ENCODE measurements at regions of chr3 and their contacts with region 1.

Region 1: DNA sequence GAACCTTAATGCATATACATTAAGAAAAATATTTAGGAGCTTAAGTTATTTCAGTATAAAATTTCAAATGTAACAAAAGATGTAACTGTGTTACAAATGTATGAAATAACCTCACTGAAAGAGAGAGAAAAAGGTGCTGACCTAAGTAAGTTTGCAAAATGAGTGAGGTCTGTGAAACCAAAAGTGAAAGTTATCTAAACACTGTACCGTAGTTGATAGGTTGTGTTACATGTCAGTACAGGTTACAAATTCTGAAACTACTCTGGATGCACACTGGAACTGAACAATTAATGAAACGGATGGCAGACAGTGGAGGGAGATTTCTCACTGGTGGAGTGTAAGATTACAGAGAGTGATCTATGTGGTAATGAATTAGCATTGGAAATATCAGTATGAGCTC is 420.7 kb downstream of the ZNF385D start:
- DNase-seq: peak; percentile 17
- ATAC-seq: no peak
- H3K4me3 ChIP-seq: peak overlapping the region; percentile 47
- H3K27ac ChIP-seq: no peak overlapping the region
- H3K4me1 ChIP-seq: no peaks in the 10 kb centered on the region
- H3K27me3 ChIP-seq: no peaks in the 10 kb centered on the region
- CTCF ChIP-seq: no peak

Region 2: DNA sequence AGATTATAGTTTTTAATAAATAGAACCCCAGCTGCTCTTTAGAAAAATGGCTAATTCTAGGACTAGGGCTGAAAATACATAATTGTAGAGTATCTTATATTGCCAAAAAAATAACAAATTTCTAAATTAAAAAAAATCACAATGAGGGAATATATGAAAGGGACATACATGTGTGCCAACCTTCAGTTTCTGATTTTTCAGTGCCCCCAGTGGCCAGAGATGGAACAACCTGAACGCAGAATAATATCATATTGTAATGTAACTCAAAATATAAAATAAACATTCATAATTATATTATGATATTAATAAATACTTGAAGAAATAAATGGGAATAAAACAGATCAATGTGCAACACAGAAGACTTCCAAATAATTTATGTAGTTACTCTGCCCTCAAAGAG is 39.7 kb before region 1 on chr3:
- CTCF ChIA-PET with region 1: no interaction called
- POLR2A ChIA-PET with region 1: no interaction called
- intact Hi-C with region 1: no loop called
- DNase-seq: peak; percentile 23
- ATAC-seq: no peak
- H3K4me3 ChIP-seq: no peak overlapping the region
- H3K27ac ChIP-seq: no peak overlapping the region
- H3K4me1 ChIP-seq: 0 out of 2 replicates have a peak, but pooled peaks cover 5% of the 10 kb centered on the region
- H3K27me3 ChIP-seq: no peaks in the 10 kb centered on the region
- CTCF ChIP-seq: peak; percentile 60

Region 3: DNA sequence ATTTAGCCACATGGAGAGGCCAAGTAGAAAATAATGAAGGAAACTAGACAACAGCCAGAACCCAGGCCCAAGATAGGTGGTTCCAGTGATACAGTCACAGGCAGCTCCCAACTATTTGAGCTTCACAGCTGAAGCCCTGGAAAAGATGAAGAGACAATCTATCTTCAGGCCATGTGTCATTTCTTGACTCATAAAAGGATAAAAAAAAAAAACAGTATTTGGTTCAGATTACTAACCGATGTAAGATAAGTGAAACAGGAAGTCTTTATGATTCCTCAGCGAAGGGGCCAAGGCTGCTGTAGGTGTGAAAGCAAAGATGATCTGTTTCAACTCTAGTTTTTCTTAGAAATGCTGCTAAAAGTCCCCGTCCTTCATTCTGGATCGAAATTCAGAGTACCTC is 26.1 kb after region 1 on chr3:
- CTCF ChIA-PET with region 1: no interaction called
- POLR2A ChIA-PET with region 1: no interaction called
- intact Hi-C with region 1: loop called (anchors 2 kb)
- DNase-seq: peak; percentile 44
- ATAC-seq: peak; percentile 49
- H3K4me3 ChIP-seq: no peak overlapping the region
- H3K27ac ChIP-seq: no peak overlapping the region
- H3K4me1 ChIP-seq: no peaks in the 10 kb centered on the region
- H3K27me3 ChIP-seq: no peaks in the 10 kb centered on the region
- CTCF ChIP-seq: no peak

Region 4: GRCh38 chr3:21682206-21682605 is 351.9 kb after region 1 on chr3:
- CTCF ChIA-PET with region 1: no interaction called
- POLR2A ChIA-PET with region 1: no interaction called
- intact Hi-C with region 1: no loop called
- DNase-seq: no peak
- ATAC-seq: no peak
- H3K4me3 ChIP-seq: no peak overlapping the region
- H3K27ac ChIP-seq: no peak overlapping the region
- H3K4me1 ChIP-seq: peaks cover 15% of the 10 kb centered on the region
- H3K27me3 ChIP-seq: no peaks in the 10 kb centered on the region
- CTCF ChIP-seq: no peak